AG04450 (cell line): ENCODE measurements at regions of chr7 and their contacts with region 1.

Region 1: DNA sequence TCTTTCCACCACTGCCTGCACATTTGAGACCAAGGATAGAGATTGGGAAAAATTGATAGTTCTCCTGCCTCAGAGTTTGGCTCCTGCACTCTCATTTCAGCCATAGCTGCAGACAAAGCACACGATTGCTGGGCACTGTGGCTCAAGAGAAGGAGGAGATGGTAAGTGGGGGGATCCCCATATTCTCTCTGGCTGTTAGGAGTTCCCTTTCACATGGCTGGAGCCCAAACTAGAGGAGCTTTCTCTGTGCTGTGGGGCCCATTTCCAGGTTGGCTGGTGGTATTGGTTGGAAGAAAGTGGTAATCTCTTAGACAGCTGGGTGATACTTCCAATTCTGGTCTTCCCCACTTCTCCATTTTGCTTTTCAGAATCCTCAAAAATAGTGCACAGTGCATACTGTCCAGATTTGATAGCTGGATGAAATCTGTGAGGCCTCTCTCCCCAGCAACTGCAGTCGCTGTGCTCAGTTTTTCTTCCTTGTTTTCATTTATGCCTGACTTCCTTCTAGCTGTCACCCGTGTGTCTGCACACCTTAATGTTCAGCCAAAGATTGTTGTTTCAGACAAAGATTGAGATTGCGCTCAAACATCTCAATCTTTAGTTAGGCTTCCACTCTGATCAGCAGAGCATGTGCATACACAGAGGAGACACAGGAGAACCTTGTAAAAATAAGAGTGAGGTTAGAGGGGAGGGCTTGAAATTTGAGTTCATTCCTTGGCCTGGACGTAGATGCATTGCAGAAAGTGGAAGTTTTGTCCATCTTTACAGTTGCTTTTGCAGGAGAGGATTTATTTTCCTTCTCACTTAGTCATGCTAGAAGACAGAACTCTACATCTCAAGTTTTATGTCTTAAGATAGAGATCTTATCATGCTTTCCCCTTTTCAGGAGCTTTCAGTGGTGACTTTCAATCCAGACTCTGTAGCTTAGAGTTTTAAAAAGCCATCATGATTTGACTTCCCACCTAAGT is 28.6 kb downstream of the RABGEF1 start:
- DNase-seq: no peak
- H3K4me3 ChIP-seq: no peak overlapping the region
- H3K27ac ChIP-seq: no peak overlapping the region
- H3K27me3 ChIP-seq: no peaks in the 10 kb centered on the region
- CTCF ChIP-seq: no peak

Region 2: DNA sequence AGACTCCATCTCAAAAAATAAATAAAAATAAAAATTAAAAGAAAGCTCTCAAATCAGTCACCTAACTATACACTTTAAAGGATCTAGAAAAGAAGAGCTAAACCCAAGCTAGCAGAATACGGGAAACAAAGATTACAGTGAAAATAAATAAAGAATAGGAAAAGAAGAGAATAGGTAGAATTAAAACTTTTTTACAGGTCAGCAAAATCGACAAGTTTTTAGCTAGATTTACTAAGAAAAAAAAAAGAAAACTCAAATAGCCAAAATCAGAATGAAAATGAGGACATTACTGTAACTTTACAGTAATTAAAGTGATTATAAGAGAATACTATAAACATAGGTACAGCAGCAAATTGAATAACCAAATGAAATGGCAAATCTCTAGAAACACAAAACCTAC is 80.1 kb before region 1 on chr7:
- CTCF ChIA-PET with region 1: interaction called, 15 read pairs
- POLR2A ChIA-PET with region 1: no interaction called
- DNase-seq: no peak
- H3K4me3 ChIP-seq: no peak overlapping the region
- H3K27ac ChIP-seq: no peak overlapping the region
- H3K27me3 ChIP-seq: no peaks in the 10 kb centered on the region
- CTCF ChIP-seq: no peak